Ascending aorta (tissue), 2 donors: ENCODE measurements at regions of chr9 and their contacts with region 1.

Region 1: GRCh38 chr9:5832543-5833529 is at the start of gene ERMP1:
- DNase-seq: peak; percentile 34 to 92
- H3K4me3 ChIP-seq: peak within 1 kb of the TSS; percentile 83 to 85
- H3K27ac ChIP-seq: peak within 1 kb of the TSS; percentile 66 to 67
- H3K4me1 ChIP-seq: peaks cover 6 to 12% of the 10 kb centered on the region in 2 donors
- H3K27me3 ChIP-seq: no peaks in the 10 kb centered on the region
- CTCF ChIP-seq: peak; percentile 83 to 92 (median 84)
- total RNA-seq, gene ERMP1: 4.8 TPM

Region 2: DNA sequence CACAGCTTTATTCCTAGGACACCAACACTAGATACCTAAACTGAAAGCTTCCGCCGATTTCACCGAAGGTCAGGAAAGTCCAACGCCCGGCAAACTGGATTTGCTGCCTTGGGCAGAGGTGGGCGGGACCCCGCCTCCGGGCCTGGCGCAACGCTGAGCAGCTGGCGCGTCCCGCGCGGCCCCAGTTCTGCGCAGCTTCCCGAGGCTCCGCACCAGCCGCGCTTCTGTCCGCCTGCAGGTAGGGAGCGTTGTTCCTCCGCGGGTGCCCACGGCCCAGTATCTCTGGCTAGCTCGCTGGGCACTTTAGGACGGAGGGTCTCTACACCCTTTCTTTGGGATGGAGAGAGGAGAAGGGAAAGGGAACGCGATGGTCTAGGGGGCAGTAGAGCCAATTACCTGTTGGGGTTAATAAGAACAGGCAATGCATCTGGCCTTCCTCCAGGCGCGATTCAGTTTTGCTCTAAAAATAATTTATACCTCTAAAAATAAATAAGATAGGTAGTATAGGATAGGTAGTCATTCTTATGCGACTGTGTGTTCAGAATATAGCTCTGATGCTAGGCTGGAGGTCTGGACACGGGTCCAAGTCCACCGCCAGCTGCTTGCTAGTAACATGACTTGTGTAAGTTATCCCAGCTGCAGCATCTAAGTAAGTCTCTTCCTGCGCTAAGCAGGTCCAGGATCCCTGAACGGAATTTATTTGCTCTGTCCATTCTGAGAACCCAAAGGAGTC is 382.3 kb before region 1 on chr9 and contains the start of gene CD274:
- intact Hi-C with region 1: loop called (anchors 10 kb)
- DNase-seq: peak; percentile 56 to 94
- H3K4me3 ChIP-seq: peak within 1 kb of the TSS; percentile 60 to 72
- H3K27ac ChIP-seq: peak within 1 kb of the TSS; percentile 79 to 80
- H3K4me1 ChIP-seq: peaks cover 3 to 30% of the 10 kb centered on the region in 2 donors
- H3K27me3 ChIP-seq: no peaks in the 10 kb centered on the region
- CTCF ChIP-seq: peak; percentile 67 to 85 (median 80)
- total RNA-seq, gene CD274: 23.8 TPM

Region 3: GRCh38 chr9:5628530-5629311 is 204.1 kb before region 1 on chr9 and contains the start of gene RIC1:
- intact Hi-C with region 1: loop called (anchors 5 kb)
- DNase-seq: peak; percentile 77 to 95
- H3K4me3 ChIP-seq: peak within 1 kb of the TSS; percentile 93 to 98
- H3K27ac ChIP-seq: peak within 1 kb of the TSS; percentile 95 to 99
- H3K4me1 ChIP-seq: peaks cover 5 to 43% of the 10 kb centered on the region in 2 donors
- H3K27me3 ChIP-seq: no peaks in the 10 kb centered on the region
- CTCF ChIP-seq: no peak
- total RNA-seq, gene RIC1: 46.7 TPM

Region 4: GRCh38 chr9:5786370-5787127 is 46.3 kb before region 1 on chr9:
- intact Hi-C with region 1: no loop called
- DNase-seq: no peak
- H3K4me3 ChIP-seq: no peak overlapping the region
- H3K27ac ChIP-seq: no peak overlapping the region
- H3K4me1 ChIP-seq: no peaks in the 10 kb centered on the region
- H3K27me3 ChIP-seq: no peaks in the 10 kb centered on the region
- CTCF ChIP-seq: no peak

Region 5: GRCh38 chr9:5800969-5801738 is 31.7 kb before region 1 on chr9:
- intact Hi-C with region 1: loop called (anchors 2 kb)
- DNase-seq: no peak
- H3K4me3 ChIP-seq: no peak overlapping the region
- H3K27ac ChIP-seq: peak overlapping the region; percentile 26 to 36
- H3K4me1 ChIP-seq: no peaks in the 10 kb centered on the region
- H3K27me3 ChIP-seq: no peaks in the 10 kb centered on the region
- CTCF ChIP-seq: no peak

Region 6: DNA sequence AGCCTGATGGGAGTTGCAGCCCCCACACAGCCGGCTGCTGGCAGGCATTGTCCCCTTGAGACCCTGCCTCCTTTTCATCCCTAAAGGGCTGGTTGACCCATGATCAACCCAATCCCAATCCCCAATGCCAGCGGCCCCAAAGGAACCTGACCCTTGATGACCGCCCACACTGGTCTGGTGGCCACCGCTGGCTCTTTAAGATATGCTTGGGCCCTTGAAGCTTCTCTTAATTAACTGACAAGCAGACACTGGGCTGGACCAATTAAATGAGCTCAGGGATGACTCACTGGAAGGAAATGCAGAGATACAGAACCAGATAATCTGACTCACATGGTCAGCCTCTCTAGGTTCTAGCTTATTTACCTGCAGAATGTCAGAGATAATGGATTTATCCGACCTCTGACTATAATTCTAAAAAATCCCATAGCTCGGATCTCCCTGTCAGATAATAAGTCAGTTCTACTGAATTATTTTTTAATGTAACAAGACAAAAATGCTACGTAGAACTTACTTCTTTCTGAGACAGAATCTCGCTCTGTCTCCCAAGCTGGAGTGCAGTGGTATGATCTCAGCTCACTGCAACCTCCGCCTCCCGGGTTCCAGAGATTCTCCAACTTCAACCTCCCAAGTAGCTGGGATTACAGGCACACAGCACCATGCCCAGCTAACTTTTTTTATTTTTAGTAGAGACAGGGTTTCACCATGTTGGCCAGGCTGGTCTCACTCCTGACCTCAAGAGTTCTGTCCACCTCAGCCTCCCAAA is 46.8 kb after region 1 on chr9:
- intact Hi-C with region 1: no loop called
- DNase-seq: no peak
- H3K4me3 ChIP-seq: no peak overlapping the region
- H3K27ac ChIP-seq: no peak overlapping the region
- H3K4me1 ChIP-seq: no peaks in the 10 kb centered on the region
- H3K27me3 ChIP-seq: no peaks in the 10 kb centered on the region
- CTCF ChIP-seq: no peak